ENCODE measurements at regions of chr10 and their contacts with region 1.

Region 1: DNA sequence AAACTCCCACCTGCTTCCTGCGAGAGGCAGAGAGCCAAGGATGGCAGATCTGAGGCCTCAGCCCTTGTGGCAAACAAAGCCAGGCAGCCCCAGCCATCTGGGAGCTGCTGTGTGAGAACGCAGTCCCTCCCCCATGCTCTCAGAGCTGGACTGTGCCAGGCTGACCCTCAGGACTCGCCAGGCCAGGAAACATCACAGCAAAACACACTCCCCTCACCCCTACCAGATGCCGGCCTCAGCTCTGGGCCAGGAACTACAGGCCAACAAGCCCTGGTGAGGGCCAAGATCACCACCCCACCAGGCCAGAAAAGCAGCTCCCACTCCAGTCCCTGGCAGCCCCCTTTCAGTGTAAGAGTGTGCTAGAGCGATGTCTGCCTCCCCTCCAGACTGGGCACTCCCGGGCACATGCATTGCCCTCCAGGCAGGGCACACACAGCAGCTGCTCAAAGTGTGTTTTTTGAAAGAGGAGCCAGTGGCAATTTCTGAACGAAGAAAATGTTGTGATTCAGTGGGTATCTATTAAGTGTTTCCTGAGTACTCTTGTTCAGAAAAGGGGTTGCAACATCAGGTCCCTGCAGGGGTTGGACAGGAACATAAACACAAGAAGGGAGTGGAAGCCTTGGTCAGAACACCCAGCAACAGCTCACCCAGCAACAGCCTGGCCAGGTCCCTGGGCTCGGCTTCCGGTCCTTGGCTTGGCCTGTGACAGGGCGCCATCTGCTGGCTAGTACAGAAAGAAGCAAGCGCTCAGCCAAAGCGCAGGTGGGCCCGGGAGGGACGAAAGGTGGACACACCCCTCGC is 18.3 kb downstream of the LRRC20 start:
- DNase-seq: peak; percentile 76 to 92
- H3K4me3 ChIP-seq: no peak overlapping the region
- H3K27ac ChIP-seq: peak overlapping the region; percentile 71; the same call in 1 of the 2 replicates
- H3K4me1 ChIP-seq: peaks cover under 1 to 11% (median 3%) of the 10 kb centered on the region in 4 experiments; a peak in 5 of 7 replicates
- H3K27me3 ChIP-seq: no peaks in the 10 kb centered on the region
- CTCF ChIP-seq: peak; percentile 80 to 99 (median 97)
- EP300 ChIP-seq: peak in 1 of 2 experiments; percentile 32; a peak in 1 of 3 replicates
- POLR2A ChIP-seq: no peak
- RAD21 ChIP-seq: peak; percentile 96 to 98

Region 2: DNA sequence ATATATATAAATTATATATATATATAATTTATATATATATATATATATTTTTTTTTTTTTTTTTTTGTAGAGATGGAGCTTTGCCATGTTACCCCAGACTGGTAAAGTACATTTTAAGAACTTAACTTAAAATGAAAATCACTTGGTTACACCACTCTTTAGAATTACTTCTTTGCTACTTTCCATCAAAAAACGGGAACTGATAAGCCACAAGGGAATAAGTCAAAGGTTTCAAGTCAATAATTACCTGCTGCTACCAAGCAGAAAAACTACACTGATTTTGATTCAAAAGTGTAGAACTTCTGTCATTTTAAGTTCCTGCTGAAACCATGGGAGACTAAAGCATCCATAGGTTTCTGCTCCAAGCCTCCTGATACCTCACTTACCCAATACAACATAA is 143.1 kb before region 1 on chr10:
- CTCF ChIA-PET with region 1: interaction called, 157 read pairs
- POLR2A ChIA-PET with region 1: interaction called, 6 read pairs
- DNase-seq: no peak
- H3K4me3 ChIP-seq: no peak overlapping the region
- H3K27ac ChIP-seq: no peak overlapping the region
- H3K4me1 ChIP-seq: no peaks in the 10 kb centered on the region
- H3K27me3 ChIP-seq: no peaks in the 10 kb centered on the region
- CTCF ChIP-seq: no peak
- EP300 ChIP-seq: no peak
- POLR2A ChIP-seq: no peak
- RAD21 ChIP-seq: no peak

Region 3: GRCh38 chr10:70233109-70233938 is 130.8 kb before region 1 on chr10 and contains the start of gene PPA1:
- CTCF ChIA-PET with region 1: interaction called, 30 read pairs
- POLR2A ChIA-PET with region 1: interaction called, 3 read pairs
- DNase-seq: peak; percentile 93 to 100
- H3K4me3 ChIP-seq: peak within 1 kb of the TSS; percentile 67 to 75 (median 68)
- H3K27ac ChIP-seq: peak within 1 kb of the TSS; percentile 38; the same call in 1 of the 2 replicates
- H3K4me1 ChIP-seq: peaks cover 0 to 7% (median 2%) of the 10 kb centered on the region in 4 experiments; a peak in 4 of 7 replicates
- H3K27me3 ChIP-seq: peaks cover 0 to 4% (median 0%) of the 10 kb centered on the region in 4 experiments; a peak in 2 of 7 replicates
- CTCF ChIP-seq: peak in 1 of 3 experiments; percentile 29; a peak in 1 of 4 replicates
- EP300 ChIP-seq: no peak
- POLR2A ChIP-seq: peak; percentile 58 to 80
- RAD21 ChIP-seq: no peak
- total RNA-seq, gene PPA1: 181 and 191 TPM in 2 replicates

Region 4: DNA sequence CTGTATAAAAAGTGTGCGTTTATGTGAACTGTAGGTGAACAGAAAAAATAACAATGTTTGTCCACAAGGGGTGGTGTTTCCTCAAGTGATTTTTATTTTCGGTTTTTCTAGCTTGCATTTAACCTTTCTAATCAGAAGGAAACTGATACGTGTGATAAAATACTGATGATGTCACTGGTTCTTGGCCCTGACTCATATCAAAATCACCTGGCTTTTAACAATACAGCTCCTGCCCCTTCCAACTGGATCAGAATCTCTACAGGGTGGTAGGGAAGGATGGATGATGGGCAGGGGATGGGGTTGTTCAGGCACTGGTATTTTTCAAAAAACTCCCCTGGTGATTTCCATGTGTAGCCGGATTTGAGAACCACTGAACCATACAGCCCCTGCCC is 91.2 kb before region 1 on chr10:
- CTCF ChIA-PET with region 1: interaction called, 329 read pairs
- POLR2A ChIA-PET with region 1: no interaction called
- DNase-seq: no peak
- H3K4me3 ChIP-seq: no peak overlapping the region
- H3K27ac ChIP-seq: no peak overlapping the region
- H3K4me1 ChIP-seq: 0 out of 7 replicates have a peak, but pooled peaks cover 0 to 5% (median 0%) of the 10 kb centered on the region in 4 experiments
- H3K27me3 ChIP-seq: no peaks in the 10 kb centered on the region
- CTCF ChIP-seq: peak in 1 of 3 experiments; percentile 29; a peak in 2 of 4 replicates
- EP300 ChIP-seq: no peak
- POLR2A ChIP-seq: no peak
- RAD21 ChIP-seq: 0 out of 4 replicates have a peak, but pooled peaks of 1 of the 2 experiments have one; percentile 7

Region 5: GRCh38 chr10:70374775-70375614 is 10.8 kb after region 1 on chr10:
- CTCF ChIA-PET with region 1: interaction called, 60 read pairs
- POLR2A ChIA-PET with region 1: interaction called, 3 read pairs
- DNase-seq: no peak
- H3K4me3 ChIP-seq: no peak overlapping the region
- H3K27ac ChIP-seq: no peak overlapping the region; the same call in 1 of the 2 replicates
- H3K4me1 ChIP-seq: peaks cover 0 to 4% (median 1%) of the 10 kb centered on the region in 4 experiments; a peak in 2 of 7 replicates
- H3K27me3 ChIP-seq: no peaks in the 10 kb centered on the region
- CTCF ChIP-seq: no peak
- EP300 ChIP-seq: no peak
- POLR2A ChIP-seq: no peak
- RAD21 ChIP-seq: no peak